ENCODE measurements at regions of chr17 and their contacts with region 1.

Region 1: GRCh38 chr17:59972778-59973177 is 8.2 kb upstream of the RNFT1 start:
- DNase-seq: peak in 1 of 4 experiments; percentile 22
- ATAC-seq: peak; percentile 56; the same call in 2 of the 3 replicates
- H3K4me3 ChIP-seq: no peak overlapping the region
- H3K27ac ChIP-seq: no peak overlapping the region
- H3K4me1 ChIP-seq: no peaks in the 10 kb centered on the region; a peak in 1 of 5 replicates
- H3K27me3 ChIP-seq: no peaks in the 10 kb centered on the region
- CTCF ChIP-seq: no peak
- EP300 ChIP-seq: no peak
- POLR2A ChIP-seq: no peak
- RAD21 ChIP-seq: no peak

Region 2: GRCh38 chr17:59601130-59601529 is 371.6 kb before region 1 on chr17:
- CTCF ChIA-PET with region 1: no interaction called
- POLR2A ChIA-PET with region 1: no interaction called
- in situ Hi-C with region 1: loop called (anchors 5 kb)
- intact Hi-C with region 1: no loop called
- DNase-seq: no peak
- ATAC-seq: no peak
- H3K4me3 ChIP-seq: no peak overlapping the region
- H3K27ac ChIP-seq: no peak overlapping the region
- H3K4me1 ChIP-seq: peaks cover 0 to 3% of the 10 kb centered on the region in 2 experiments; a peak in 1 of 5 replicates
- H3K27me3 ChIP-seq: no peaks in the 10 kb centered on the region
- CTCF ChIP-seq: no peak
- EP300 ChIP-seq: no peak
- POLR2A ChIP-seq: no peak
- RAD21 ChIP-seq: no peak

Region 3: DNA sequence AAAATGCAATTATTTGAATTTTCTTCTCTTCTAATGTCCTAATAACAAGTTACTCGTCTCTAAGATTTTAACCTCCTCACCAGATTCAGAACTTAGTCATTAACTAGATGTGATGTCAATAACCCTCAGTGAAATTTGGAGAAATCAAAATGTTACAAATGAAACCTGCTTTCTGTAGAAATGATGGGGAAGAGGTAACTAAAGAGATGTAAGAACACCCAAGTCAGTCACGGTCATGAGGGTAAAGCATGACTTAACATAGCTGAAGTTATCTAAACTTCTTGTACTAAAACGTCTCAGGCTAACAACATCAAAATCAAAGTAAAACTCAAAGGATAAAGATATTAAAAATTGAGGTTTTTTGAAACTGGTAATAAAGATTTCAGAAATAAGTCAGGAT is 17.9 kb before region 1 on chr17:
- CTCF ChIA-PET with region 1: no interaction called
- POLR2A ChIA-PET with region 1: no interaction called
- in situ Hi-C with region 1: no loop called
- intact Hi-C with region 1: no loop called
- DNase-seq: no peak
- ATAC-seq: no peak
- H3K4me3 ChIP-seq: no peak overlapping the region
- H3K27ac ChIP-seq: no peak overlapping the region
- H3K4me1 ChIP-seq: no peaks in the 10 kb centered on the region; a peak in 1 of 5 replicates
- H3K27me3 ChIP-seq: no peaks in the 10 kb centered on the region
- CTCF ChIP-seq: no peak
- EP300 ChIP-seq: no peak
- POLR2A ChIP-seq: no peak
- RAD21 ChIP-seq: no peak

Region 4: DNA sequence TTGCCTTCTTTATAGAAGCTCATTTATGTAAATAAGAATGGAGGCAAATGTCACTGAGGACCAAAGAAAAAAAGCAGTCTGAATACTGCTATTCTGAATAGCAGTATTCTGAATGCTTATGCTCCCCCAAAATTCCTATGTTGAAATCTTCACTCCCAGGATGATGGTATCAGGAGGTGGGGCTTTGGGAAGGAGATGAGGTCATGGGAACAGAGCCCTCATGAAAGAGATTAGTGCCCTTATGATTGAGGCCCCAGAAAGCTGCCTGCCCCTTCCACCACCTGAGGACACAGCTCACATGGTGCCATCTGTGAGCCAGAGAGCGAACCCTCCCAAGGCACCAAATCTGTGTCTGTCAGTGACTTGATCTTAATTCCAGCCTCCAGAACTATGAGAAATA is 77.2 kb after region 1 on chr17:
- CTCF ChIA-PET with region 1: no interaction called
- POLR2A ChIA-PET with region 1: no interaction called
- in situ Hi-C with region 1: no loop called
- intact Hi-C with region 1: no loop called
- DNase-seq: no peak
- ATAC-seq: no peak
- H3K4me3 ChIP-seq: no peak overlapping the region
- H3K27ac ChIP-seq: no peak overlapping the region
- H3K4me1 ChIP-seq: no peaks in the 10 kb centered on the region
- H3K27me3 ChIP-seq: no peaks in the 10 kb centered on the region
- CTCF ChIP-seq: no peak
- EP300 ChIP-seq: no peak
- POLR2A ChIP-seq: no peak
- RAD21 ChIP-seq: no peak

Measured in K562 (cell line).